ENCODE measurements at regions of chr2 and their contacts with region 1.

Region 1: DNA sequence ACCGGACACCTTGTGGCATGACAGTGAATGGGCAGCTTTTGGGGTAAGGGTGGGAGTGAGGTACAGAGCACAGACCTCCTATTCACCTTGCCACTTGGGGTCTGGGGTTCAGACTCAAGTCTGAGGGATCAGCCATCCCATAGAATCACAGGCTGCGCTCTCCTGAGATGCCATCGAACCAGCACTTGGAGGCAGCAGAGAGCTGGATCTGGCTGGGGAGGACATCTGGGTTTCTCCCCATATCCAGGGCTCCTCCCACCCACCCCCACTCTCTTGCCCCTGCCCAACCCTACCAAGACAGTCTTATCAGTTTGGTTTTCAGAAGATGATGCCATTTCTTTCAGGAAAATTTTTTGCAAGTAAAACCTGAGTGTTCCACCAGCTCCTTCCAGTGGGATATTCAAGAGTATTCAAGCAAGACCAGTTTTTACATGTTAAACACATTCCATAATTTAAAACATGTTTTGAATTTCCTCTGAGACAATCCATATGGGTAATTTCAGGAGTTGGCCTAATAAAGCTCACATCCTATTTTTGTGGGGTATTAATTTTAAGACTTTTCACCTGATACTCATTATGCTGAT is 29.2 kb upstream of the TEX44 start:
- DNase-seq: peak; percentile 51 to 96 (median 72)

Region 2: GRCh38 chr2:231604685-231605606 is 41.5 kb after region 1 on chr2:
- intact Hi-C with region 1: loop called (anchors 1 kb)
- DNase-seq: peak; percentile 100

Region 3: DNA sequence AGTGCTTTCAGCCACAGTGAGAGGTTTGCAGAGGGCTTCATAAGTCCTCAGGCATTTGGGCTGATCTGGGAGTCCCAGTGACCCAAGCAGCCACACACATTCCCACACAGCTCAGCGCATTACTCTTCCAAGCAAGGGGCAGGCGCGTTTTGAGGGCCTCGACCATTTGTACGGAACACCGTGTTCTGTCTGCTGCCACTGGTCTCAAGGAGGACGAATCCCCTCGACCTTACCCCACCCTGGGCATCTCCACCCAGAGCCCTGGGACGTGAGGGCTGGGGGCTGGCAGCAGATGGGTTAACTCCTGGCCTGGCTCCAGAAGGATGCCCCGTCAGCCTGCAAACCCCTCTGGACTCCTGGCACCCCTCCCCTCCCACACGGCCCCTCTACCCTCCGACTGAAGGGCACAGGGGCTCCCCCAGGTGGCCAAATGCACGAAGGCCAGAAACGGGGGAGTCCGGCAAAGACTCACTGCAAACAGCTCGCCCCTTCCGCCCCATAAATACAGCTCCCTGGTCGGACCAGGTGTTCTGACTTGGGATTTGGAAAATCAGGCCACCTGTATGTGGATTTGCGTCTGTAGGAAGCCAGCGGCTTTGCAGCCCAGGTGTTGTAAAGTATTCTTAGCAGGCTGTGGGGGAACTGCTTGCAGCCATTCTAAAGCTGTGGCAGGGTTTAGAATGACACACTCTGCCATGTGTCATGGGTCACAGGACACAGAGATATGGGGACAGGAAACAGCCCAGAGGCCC is 111.3 kb after region 1 on chr2:
- intact Hi-C with region 1: loop called (anchors 5 kb)
- DNase-seq: peak in 8 of 10 donors; percentile 49 to 95 (median 76)

Region 4: DNA sequence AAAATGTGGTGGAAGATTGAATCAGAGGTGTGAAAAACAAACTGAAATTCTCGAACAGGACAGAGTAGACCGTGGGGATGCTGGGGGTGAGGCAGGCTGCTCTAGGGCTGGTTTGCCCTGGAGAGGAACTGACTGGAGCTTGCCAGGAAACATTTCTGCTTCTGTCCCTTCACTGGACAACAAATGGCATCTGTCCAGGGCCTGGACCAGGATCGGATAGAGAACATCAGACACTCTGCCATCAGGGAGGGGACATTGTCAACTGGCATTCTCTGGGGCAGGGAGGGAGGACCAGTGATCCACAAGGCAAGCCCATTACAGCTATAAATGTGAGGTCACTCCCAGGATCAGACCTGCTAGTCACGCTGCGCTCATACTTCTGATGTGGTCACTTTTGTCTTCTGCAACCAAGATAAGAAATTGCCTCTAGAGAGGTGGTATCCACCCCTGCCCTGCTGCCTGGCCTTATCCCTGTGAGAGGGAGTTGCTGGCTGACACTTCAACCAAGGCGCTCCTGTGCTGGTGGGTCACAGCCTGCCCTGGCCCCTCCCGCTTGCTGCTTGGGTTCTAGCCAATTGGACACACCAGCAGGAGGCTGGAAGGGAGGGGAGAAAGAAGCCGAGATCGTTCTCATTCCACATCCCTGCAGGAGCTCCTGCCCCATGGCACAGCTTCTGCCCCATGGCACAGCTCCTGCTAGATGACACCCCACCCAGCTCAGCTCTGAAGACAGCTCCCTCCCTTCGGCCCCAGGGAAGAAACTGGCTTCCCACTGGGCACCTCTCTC is 354.0 kb after region 1 on chr2:
- intact Hi-C with region 1: no loop called
- DNase-seq: peak in 7 of 10 donors; percentile 16 to 90 (median 62)

Measured in posterior cingulate gyrus (tissue), 11 donors.